SK-N-SH (cell line): ENCODE measurements at regions of chr20 and their contacts with region 1.

Region 1: GRCh38 chr20:2172305-2173175 is 70.9 kb downstream of the STK35 start:
- DNase-seq: peak; percentile 82
- H3K4me3 ChIP-seq: no peak overlapping the region; a peak in 1 of 4 replicates
- H3K27ac ChIP-seq: no peak overlapping the region
- H3K4me1 ChIP-seq: peaks cover 0 to 2% of the 10 kb centered on the region in 2 experiments; a peak in 1 of 4 replicates
- H3K27me3 ChIP-seq: peaks cover 9% of the 10 kb centered on the region
- CTCF ChIP-seq: peak; percentile 92
- EP300 ChIP-seq: no peak
- RAD21 ChIP-seq: peak; percentile 94

Region 2: DNA sequence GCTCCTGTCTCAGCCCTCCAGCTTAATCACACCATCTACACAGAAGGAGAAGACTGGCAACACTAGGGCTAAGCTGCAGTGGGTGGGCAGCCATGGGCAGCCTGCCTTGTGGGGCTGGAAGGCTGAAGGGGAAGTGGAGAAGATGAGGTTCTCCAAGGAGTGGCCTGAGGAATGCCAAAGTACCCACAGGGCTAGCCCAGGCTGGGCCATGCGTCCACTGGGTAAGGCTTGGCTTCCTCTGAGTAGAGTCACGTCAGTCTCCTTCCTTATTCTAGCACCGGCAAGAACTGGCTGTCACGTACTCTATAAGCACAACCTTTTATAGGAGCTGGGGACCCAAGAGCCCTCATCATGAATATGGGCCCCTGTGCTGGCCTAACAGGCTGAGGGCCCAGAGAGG is 388.0 kb before region 1 on chr20:
- CTCF ChIA-PET with region 1: interaction called, 11 read pairs
- POLR2A ChIA-PET with region 1: no interaction called
- DNase-seq: no peak
- H3K4me3 ChIP-seq: no peak overlapping the region
- H3K27ac ChIP-seq: no peak overlapping the region
- H3K4me1 ChIP-seq: no peaks in the 10 kb centered on the region
- H3K27me3 ChIP-seq: peaks cover 29% of the 10 kb centered on the region; the same call in 1 of the 2 replicates
- CTCF ChIP-seq: no peak
- EP300 ChIP-seq: no peak
- RAD21 ChIP-seq: no peak

Region 3: DNA sequence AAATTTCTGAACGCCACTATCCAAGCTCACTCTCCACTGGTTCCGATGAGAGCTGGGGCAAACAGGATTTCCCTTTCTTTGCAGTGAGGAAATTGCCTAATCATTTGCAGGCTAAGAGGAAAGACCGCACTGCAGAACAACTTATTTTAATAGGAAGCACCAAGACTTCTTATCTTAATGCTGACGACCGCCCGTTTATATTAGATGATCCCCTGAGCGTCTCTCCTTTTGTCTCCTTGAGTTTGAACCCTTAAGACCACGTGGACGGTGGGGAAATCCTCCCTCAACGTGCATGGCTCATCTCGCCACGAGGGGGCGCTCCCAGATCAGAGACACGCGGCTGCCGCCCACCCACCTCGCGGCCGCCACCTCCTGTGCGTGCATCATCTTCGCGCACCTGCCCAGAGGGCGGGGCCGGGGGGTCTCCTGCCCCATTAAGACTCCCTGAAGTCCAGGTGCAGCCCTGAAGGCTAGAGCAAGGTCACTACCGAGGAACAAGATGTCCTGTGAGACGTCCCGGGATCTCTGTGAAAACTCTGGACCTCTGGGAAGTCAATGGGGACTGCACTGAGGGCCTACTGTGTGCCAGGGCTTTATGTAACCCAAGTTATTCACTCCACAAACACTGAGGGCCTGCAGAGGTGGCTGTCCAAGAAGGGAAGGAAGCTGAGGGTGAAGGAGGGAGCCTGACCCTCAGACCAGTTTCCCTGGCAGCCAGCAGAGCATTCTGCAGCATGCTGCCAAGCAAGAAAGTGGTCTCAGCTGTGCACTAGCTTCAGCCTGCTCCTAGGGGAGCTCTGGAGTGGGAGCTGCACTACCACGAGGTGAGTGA is 206.8 kb before region 1 on chr20:
- CTCF ChIA-PET with region 1: interaction called, 42 read pairs
- POLR2A ChIA-PET with region 1: no interaction called
- DNase-seq: peak; percentile 84
- H3K4me3 ChIP-seq: no peak overlapping the region
- H3K27ac ChIP-seq: no peak overlapping the region
- H3K4me1 ChIP-seq: no peaks in the 10 kb centered on the region; a peak in 1 of 4 replicates
- H3K27me3 ChIP-seq: peaks cover 34% of the 10 kb centered on the region; the same call in 1 of the 2 replicates
- CTCF ChIP-seq: peak; percentile 93
- EP300 ChIP-seq: no peak
- RAD21 ChIP-seq: peak; percentile 79

Region 4: DNA sequence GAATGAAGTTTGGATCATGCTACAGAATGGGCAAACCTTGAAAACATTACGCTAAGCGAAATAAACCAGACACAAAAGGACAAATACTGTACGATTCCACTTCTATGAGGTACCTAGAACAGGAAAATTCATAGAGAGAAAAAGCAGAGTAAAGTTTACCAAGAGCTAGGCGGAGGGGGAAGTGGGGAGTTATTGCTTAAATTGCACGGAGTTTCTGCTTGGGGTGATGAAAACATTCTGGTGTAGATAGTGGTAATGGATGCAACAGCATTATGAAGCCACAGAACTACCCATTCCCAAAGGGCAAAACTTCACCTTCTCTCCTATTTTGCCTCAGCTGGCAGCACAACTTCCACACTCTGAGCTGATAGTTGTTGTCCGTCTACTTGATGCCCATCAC is 172.3 kb before region 1 on chr20:
- CTCF ChIA-PET with region 1: interaction called, 130 read pairs
- POLR2A ChIA-PET with region 1: no interaction called
- DNase-seq: no peak
- H3K4me3 ChIP-seq: no peak overlapping the region
- H3K27ac ChIP-seq: no peak overlapping the region
- H3K4me1 ChIP-seq: no peaks in the 10 kb centered on the region
- H3K27me3 ChIP-seq: peaks cover 16% of the 10 kb centered on the region; the same call in 1 of the 2 replicates
- CTCF ChIP-seq: no peak
- EP300 ChIP-seq: no peak
- RAD21 ChIP-seq: no peak

Region 5: GRCh38 chr20:2093159-2093781 is 79.3 kb before region 1 on chr20:
- CTCF ChIA-PET with region 1: interaction called, 23 read pairs
- POLR2A ChIA-PET with region 1: no interaction called
- DNase-seq: peak; percentile 36
- H3K4me3 ChIP-seq: no peak overlapping the region; a peak in 1 of 4 replicates
- H3K27ac ChIP-seq: no peak overlapping the region
- H3K4me1 ChIP-seq: no peaks in the 10 kb centered on the region
- H3K27me3 ChIP-seq: peaks cover 26% of the 10 kb centered on the region
- CTCF ChIP-seq: peak; percentile 70
- EP300 ChIP-seq: no peak
- RAD21 ChIP-seq: peak; percentile 67

Region 6: GRCh38 chr20:2151858-2152281 is 20.7 kb before region 1 on chr20:
- CTCF ChIA-PET with region 1: interaction called, 39 read pairs
- POLR2A ChIA-PET with region 1: no interaction called
- DNase-seq: peak; percentile 68
- H3K4me3 ChIP-seq: no peak overlapping the region
- H3K27ac ChIP-seq: no peak overlapping the region
- H3K4me1 ChIP-seq: peaks cover 13 to 20% of the 10 kb centered on the region in 2 experiments; a peak in 3 of 4 replicates
- H3K27me3 ChIP-seq: no peaks in the 10 kb centered on the region
- CTCF ChIP-seq: no peak
- EP300 ChIP-seq: peak in 1 of 2 experiments; percentile 29; a peak in 1 of 4 replicates
- RAD21 ChIP-seq: no peak

Region 7: DNA sequence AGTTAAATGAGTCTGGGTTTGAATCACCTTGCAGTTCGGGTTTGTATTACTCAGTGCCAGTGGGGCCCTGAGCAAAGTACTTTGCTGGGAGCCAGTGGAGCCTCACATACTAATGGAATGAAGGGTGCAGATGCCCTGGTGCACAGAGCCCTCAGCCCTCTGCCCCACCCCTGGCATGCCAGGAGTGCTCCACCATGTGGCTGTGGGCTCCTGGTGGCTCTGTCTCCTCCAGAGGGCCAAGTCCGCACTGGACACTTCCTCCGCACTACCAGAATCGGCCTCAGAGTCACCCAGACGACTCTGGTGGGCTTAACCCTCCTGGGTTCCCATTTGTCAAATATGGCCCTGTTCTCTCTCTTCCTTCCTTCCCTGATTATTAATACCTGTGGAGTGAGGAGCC is 23.1 kb after region 1 on chr20:
- CTCF ChIA-PET with region 1: interaction called, 22 read pairs
- POLR2A ChIA-PET with region 1: no interaction called
- DNase-seq: no peak
- H3K4me3 ChIP-seq: no peak overlapping the region
- H3K27ac ChIP-seq: no peak overlapping the region
- H3K4me1 ChIP-seq: no peaks in the 10 kb centered on the region; a peak in 1 of 4 replicates
- H3K27me3 ChIP-seq: no peaks in the 10 kb centered on the region; the same call in 1 of the 2 replicates
- CTCF ChIP-seq: no peak
- EP300 ChIP-seq: no peak
- RAD21 ChIP-seq: no peak

Region 8: DNA sequence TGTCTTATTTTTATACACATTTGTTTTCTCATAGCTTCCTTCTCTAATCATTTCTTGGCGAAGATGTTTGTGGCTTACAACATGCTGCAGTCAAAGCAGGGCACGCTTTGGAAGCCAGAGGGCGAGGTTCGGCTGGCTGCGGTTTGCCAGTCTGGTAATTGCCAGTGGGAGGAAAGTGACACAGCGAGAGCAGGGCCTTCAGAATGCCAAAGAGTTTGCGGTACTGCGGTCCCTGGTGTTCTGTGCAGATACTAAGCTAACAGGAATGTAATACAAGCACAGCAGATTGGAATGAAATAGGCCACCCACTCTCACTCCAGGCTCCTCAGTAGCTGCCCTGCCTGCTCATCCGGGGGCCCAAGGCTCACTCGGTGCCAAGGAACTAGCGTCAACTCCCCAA is 64.5 kb after region 1 on chr20:
- CTCF ChIA-PET with region 1: no interaction called
- POLR2A ChIA-PET with region 1: no interaction called
- DNase-seq: no peak
- H3K4me3 ChIP-seq: no peak overlapping the region
- H3K27ac ChIP-seq: no peak overlapping the region
- H3K4me1 ChIP-seq: no peaks in the 10 kb centered on the region
- H3K27me3 ChIP-seq: no peaks in the 10 kb centered on the region
- CTCF ChIP-seq: no peak
- EP300 ChIP-seq: no peak
- RAD21 ChIP-seq: no peak